ENCODE measurements at regions of chr17 and their contacts with region 1.

Region 1: GRCh38 chr17:75845049-75845860 is 1.1 kb upstream of the UNC13D start:
- DNase-seq: peak; percentile 70
- H3K4me3 ChIP-seq: peak overlapping the region in 1 of 3 experiments; percentile 2
- H3K27ac ChIP-seq: peak overlapping the region; percentile 16
- H3K4me1 ChIP-seq: peaks cover 26% of the 10 kb centered on the region
- H3K27me3 ChIP-seq: no peaks in the 10 kb centered on the region
- CTCF ChIP-seq: peak; percentile 85

Region 2: GRCh38 chr17:75720725-75721462 is 124.4 kb before region 1 on chr17 and contains the start of gene ITGB4:
- CTCF ChIA-PET with region 1: no interaction called
- dilution Hi-C with region 1: loop called (anchors 10 kb)
- in situ Hi-C with region 1: no loop called
- intact Hi-C with region 1: no loop called
- DNase-seq: peak; percentile 92
- H3K4me3 ChIP-seq: peak within 1 kb of the TSS; percentile 72 to 98 (median 95)
- H3K27ac ChIP-seq: peak within 1 kb of the TSS; percentile 82
- H3K4me1 ChIP-seq: peaks cover 25% of the 10 kb centered on the region
- H3K27me3 ChIP-seq: no peaks in the 10 kb centered on the region
- CTCF ChIP-seq: no peak
- total RNA-seq, gene ITGB4: 2,525 to 2,618 TPM

Region 3: GRCh38 chr17:75764711-75765421 is 80.4 kb before region 1 on chr17 and contains the start of gene GALK1:
- CTCF ChIA-PET with region 1: no interaction called
- dilution Hi-C with region 1: no loop called
- in situ Hi-C with region 1: no loop called
- intact Hi-C with region 1: loop called (anchors 1 kb)
- DNase-seq: peak; percentile 76
- H3K4me3 ChIP-seq: peak within 1 kb of the TSS; percentile 45 to 57 (median 47)
- H3K27ac ChIP-seq: peak within 1 kb of the TSS; percentile 20
- H3K4me1 ChIP-seq: peaks cover 9% of the 10 kb centered on the region
- H3K27me3 ChIP-seq: no peaks in the 10 kb centered on the region
- CTCF ChIP-seq: peak; percentile 6 to 74
- total RNA-seq, gene GALK1: 1.5 to 3.0 TPM

Region 4: GRCh38 chr17:75784473-75785015 is 60.7 kb before region 1 on chr17 and contains the start of gene UNK:
- CTCF ChIA-PET with region 1: no interaction called
- dilution Hi-C with region 1: loop called (anchors 10 kb)
- in situ Hi-C with region 1: no loop called
- intact Hi-C with region 1: no loop called
- DNase-seq: peak; percentile 98
- H3K4me3 ChIP-seq: peak within 1 kb of the TSS; percentile 57 to 81 (median 67)
- H3K27ac ChIP-seq: peak within 1 kb of the TSS; percentile 96
- H3K4me1 ChIP-seq: peaks cover 33% of the 10 kb centered on the region
- H3K27me3 ChIP-seq: no peaks in the 10 kb centered on the region
- CTCF ChIP-seq: no peak
- total RNA-seq, gene UNK: 15.2 to 15.8 TPM

Region 5: GRCh38 chr17:75855310-75856081 is 10.2 kb after region 1 on chr17 and contains the start of gene WBP2:
- CTCF ChIA-PET with region 1: no interaction called
- dilution Hi-C with region 1: no loop called
- in situ Hi-C with region 1: no loop called
- intact Hi-C with region 1: loop called (anchors 1 kb)
- DNase-seq: peak; percentile 100
- H3K4me3 ChIP-seq: peak within 1 kb of the TSS; percentile 66 to 90 (median 84)
- H3K27ac ChIP-seq: peak within 1 kb of the TSS; percentile 81
- H3K4me1 ChIP-seq: peaks cover 26% of the 10 kb centered on the region
- H3K27me3 ChIP-seq: no peaks in the 10 kb centered on the region
- CTCF ChIP-seq: peak in 1 of 2 donors; percentile 37
- total RNA-seq, gene WBP2: 50.2 to 88.0 TPM

Region 6: DNA sequence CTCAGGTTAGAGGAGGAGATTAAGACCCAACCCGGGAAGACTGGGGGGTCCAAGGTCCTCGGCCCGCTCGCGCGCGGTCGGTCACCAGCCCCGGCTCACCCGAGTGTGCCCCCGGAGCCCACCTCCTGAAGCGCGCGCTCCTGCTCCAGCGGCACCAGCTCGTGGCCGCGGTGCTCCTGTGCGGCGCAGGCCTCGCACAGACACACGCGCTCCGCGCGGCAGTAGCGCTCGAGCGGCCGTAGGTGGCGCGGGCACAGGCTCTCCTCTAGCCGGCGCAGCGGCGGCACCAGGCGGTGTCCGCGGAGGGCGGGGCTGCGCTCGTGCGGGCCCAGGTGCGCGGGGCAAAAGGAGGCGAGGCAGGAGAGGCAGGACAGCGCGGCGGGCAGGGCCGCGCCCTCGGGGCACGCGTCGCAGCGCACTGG is 32.5 kb after region 1 on chr17:
- CTCF ChIA-PET with region 1: interaction called, 12 read pairs
- dilution Hi-C with region 1: no loop called
- in situ Hi-C with region 1: no loop called
- intact Hi-C with region 1: no loop called
- DNase-seq: peak; percentile 76
- H3K4me3 ChIP-seq: peak overlapping the region; percentile 64 to 67 (median 65)
- H3K27ac ChIP-seq: peak overlapping the region; percentile 76
- H3K4me1 ChIP-seq: peaks cover 34% of the 10 kb centered on the region
- H3K27me3 ChIP-seq: no peaks in the 10 kb centered on the region
- CTCF ChIP-seq: peak; percentile 30 to 64

Region 7: GRCh38 chr17:75896415-75897159 is 51.3 kb after region 1 on chr17 and contains the start of gene TRIM65:
- CTCF ChIA-PET with region 1: no interaction called
- dilution Hi-C with region 1: loop called (anchors 5 kb)
- in situ Hi-C with region 1: no loop called
- intact Hi-C with region 1: no loop called
- DNase-seq: peak; percentile 75
- H3K4me3 ChIP-seq: peak within 1 kb of the TSS; percentile 51 to 84 (median 77)
- H3K27ac ChIP-seq: peak within 1 kb of the TSS; percentile 40
- H3K4me1 ChIP-seq: peaks cover 8% of the 10 kb centered on the region
- H3K27me3 ChIP-seq: no peaks in the 10 kb centered on the region
- CTCF ChIP-seq: peak; percentile 9 to 53
- total RNA-seq, gene TRIM65: 19.3 to 20.2 TPM